Activated B cell treated with CpG ODN at 0.5 μM for 24 hours (primary cell): ENCODE measurements at regions of chr19 and their contacts with region 1.

Region 1: DNA sequence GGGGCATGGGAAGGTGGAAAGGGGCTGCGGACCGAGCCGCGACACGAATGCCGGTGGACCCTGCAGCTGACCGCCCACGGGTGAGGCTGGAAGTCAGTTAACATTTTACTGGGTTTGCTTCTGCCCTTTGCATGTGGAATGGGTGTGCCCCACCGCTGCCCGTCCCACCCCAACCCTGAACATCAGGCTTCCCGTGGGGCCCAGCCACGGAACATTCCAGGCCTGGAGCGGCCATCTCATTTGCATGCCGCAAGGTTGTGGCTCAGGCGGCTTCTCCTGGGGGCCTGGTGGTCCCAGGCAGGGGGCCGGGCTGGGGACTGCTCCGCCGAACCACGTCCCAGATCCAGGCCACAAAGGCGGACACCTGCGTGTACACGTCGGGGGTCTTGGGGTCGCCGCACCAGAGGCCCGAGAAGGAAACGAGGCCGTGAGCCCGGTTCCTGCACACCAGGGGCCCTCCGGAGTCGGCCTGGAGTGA is 9.3 kb downstream of the FSTL3 start:
- DNase-seq: no peak
- ATAC-seq: no peak
- H3K4me3 Mint-ChIP-seq: no peak overlapping the region
- H3K27ac Mint-ChIP-seq: no peak overlapping the region
- H3K4me1 Mint-ChIP-seq: peaks cover 8% of the 10 kb centered on the region
- H3K27me3 Mint-ChIP-seq: no peaks in the 10 kb centered on the region
- CTCF ChIP-seq: no peak

Region 2: DNA sequence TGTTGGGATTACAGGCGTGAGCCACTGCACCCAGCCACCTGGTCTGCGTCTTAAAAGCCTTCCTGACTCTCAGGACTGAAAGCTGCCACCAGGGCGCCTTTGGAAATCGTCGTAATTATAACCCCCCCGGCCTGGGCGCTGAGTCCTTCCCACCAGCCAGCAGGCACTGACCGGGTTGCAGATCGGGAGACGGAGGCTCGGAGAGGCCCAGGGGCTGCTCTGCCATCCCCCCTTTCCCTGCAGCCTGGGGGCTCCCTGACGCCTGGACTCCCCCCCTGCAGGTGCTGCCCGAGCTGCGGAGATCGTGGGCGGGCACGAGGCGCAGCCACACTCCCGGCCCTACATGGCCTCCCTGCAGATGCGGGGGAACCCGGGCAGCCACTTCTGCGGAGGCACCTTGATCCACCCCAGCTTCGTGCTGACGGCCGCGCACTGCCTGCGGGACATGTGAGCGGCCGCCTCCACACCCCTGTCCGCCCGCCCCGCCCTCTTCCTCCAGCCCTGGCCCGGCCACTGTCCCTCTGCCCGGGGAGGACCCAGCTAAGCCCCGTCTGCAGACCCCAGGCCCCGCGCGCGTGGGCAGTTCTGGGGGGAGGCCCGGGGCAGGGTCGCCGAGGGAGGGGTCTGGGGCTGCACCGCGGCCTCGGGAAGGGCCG is 157.8 kb after region 1 on chr19:
- CTCF ChIA-PET with region 1: no interaction called
- POLR2A ChIA-PET with region 1: no interaction called
- intact Hi-C with region 1: no loop called
- DNase-seq: no peak
- ATAC-seq: no peak
- H3K4me3 Mint-ChIP-seq: no peak overlapping the region
- H3K27ac Mint-ChIP-seq: no peak overlapping the region
- H3K4me1 Mint-ChIP-seq: peaks cover 11% of the 10 kb centered on the region
- H3K27me3 Mint-ChIP-seq: peaks cover 40% of the 10 kb centered on the region
- CTCF ChIP-seq: no peak

Region 3: DNA sequence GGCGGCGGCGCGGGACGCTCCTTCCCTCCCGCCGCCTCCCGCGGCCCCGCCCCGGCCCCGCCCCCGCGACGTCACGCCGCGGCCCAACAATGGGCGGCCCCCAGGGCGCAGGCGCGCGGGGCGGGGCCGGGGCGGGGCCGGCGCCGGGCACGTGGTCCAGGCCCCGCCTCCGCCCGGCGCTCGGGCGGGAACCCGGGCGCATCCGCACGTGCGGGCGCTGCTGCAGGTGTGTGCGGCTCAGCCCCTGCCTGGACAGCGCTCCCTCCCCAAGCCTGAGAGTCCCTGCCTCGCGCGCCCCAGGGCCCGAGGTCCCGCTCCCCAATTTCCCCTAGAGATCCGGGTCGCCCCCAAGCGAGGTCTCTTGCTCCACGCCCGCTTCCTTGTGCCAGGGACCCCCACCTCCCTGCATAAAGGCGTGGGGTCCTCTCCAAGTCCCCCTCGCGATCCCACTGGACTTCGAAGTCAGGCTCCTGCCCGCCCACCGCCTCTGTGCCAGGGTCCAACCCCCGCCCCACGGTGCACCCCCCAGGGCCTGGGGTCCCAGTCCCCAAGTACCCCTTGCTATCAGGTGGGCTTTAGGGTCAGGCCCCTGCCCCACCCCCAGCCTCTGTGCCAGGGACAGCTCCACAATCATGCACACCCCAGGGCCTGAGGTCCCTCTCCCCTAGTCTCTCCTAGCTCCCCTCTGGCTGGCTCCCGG is 883.0 kb after region 1 on chr19 and contains the start of gene MEX3D:
- CTCF ChIA-PET with region 1: no interaction called
- POLR2A ChIA-PET with region 1: interaction called, 11 read pairs
- intact Hi-C with region 1: no loop called
- DNase-seq: peak; percentile 77
- ATAC-seq: peak; percentile 93
- H3K4me3 Mint-ChIP-seq: peak within 1 kb of the TSS; percentile 57
- H3K27ac Mint-ChIP-seq: no peak within 1 kb of the TSS
- H3K4me1 Mint-ChIP-seq: peaks cover 5% of the 10 kb centered on the region
- H3K27me3 Mint-ChIP-seq: no peaks in the 10 kb centered on the region
- CTCF ChIP-seq: no peak
- total RNA-seq, gene MEX3D: 2.1 and 2.5 TPM in 2 replicates